CD8-positive, alpha-beta T cell (primary cell): ENCODE measurements at regions of chr19 and their contacts with region 1.

Region 1: DNA sequence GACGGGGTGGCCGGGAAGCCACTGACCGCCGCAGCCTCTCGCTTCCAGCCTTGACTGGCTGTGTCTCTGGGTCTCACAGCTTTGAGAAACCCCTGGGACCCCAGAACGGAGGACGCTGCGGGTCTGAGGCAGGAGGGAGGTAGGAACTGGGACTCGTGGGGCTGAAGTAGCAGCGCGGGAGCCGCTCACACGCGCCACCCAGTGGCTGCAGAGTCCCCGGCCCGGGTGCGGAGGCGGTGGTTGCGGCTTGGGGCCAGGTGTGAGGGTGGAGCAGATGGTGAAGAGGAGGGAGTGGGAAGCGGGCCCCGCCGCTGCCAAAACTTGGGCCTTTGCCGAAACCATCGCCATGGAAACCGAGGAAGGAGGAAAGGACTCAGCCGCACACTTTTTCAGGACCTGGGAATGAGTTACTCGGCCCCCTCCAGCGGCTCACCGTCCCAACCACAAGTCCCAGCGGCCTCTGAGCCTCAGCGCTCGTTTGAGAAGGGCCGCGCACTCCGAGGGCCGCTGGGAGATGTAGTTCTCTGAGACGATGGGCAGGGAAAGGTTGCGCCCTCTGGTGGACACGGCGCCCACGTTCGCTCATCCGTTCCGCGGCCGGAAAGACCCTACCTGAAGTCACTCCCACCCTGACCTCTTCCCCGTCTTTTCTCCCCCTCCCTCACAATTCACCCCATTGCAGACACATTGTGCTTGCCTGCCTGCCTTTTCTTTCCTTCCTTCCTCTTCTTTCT is 2.2 kb upstream of the SLC17A7 start:
- DNase-seq: peak; percentile 86 to 97 (median 94)
- ATAC-seq: peak; percentile 88
- H3K4me3 ChIP-seq: peak overlapping the region; percentile 57 to 76
- H3K4me3 Mint-ChIP-seq: peak overlapping the region; percentile 79
- H3K27ac ChIP-seq: peak overlapping the region; percentile 48 to 66
- H3K27ac Mint-ChIP-seq: peak overlapping the region; percentile 71
- H3K4me1 ChIP-seq: peaks cover 25% of the 10 kb centered on the region
- H3K4me1 Mint-ChIP-seq: peaks cover 37% of the 10 kb centered on the region
- H3K27me3 ChIP-seq: peaks cover 37 to 40% of the 10 kb centered on the region in 2 experiments
- H3K27me3 Mint-ChIP-seq: peaks cover 36% of the 10 kb centered on the region
- CTCF ChIP-seq: peak; percentile 74

Region 2: GRCh38 chr19:49224856-49225255 is 218.7 kb before region 1 on chr19:
- CTCF ChIA-PET with region 1: interaction called, 3 read pairs
- POLR2A ChIA-PET with region 1: interaction called, 4 read pairs
- intact Hi-C with region 1: loop called (anchors 1 kb)
- DNase-seq: peak in 2 of 9 experiments; percentile 26 to 28
- ATAC-seq: no peak
- H3K4me3 ChIP-seq: no peak overlapping the region
- H3K4me3 Mint-ChIP-seq: no peak overlapping the region
- H3K27ac ChIP-seq: no peak overlapping the region
- H3K27ac Mint-ChIP-seq: no peak overlapping the region
- H3K4me1 ChIP-seq: peaks cover 8% of the 10 kb centered on the region
- H3K4me1 Mint-ChIP-seq: peaks cover 4% of the 10 kb centered on the region
- H3K27me3 ChIP-seq: no peaks in the 10 kb centered on the region
- H3K27me3 Mint-ChIP-seq: peaks cover 12% of the 10 kb centered on the region
- CTCF ChIP-seq: no peak

Region 3: GRCh38 chr19:49272184-49272583 is 171.3 kb before region 1 on chr19:
- CTCF ChIA-PET with region 1: interaction called, 5 read pairs
- POLR2A ChIA-PET with region 1: no interaction called
- intact Hi-C with region 1: loop called in 1 of 2 experiments (anchors 2 kb)
- DNase-seq: no peak
- ATAC-seq: no peak
- H3K4me3 ChIP-seq: no peak overlapping the region
- H3K4me3 Mint-ChIP-seq: no peak overlapping the region
- H3K27ac ChIP-seq: no peak overlapping the region
- H3K27ac Mint-ChIP-seq: no peak overlapping the region
- H3K4me1 ChIP-seq: no peaks in the 10 kb centered on the region
- H3K4me1 Mint-ChIP-seq: no peaks in the 10 kb centered on the region
- H3K27me3 ChIP-seq: no peaks in the 10 kb centered on the region
- H3K27me3 Mint-ChIP-seq: peaks cover 13% of the 10 kb centered on the region
- CTCF ChIP-seq: no peak

Region 4: GRCh38 chr19:49333811-49334288 is 109.7 kb before region 1 on chr19:
- CTCF ChIA-PET with region 1: interaction called, 3 read pairs
- POLR2A ChIA-PET with region 1: interaction called, 3 read pairs
- intact Hi-C with region 1: loop called (anchors 1 kb)
- DNase-seq: peak; percentile 33 to 90 (median 73)
- ATAC-seq: peak; percentile 59
- H3K4me3 ChIP-seq: peak overlapping the region; percentile 20 to 50
- H3K4me3 Mint-ChIP-seq: peak overlapping the region; percentile 77
- H3K27ac ChIP-seq: peak overlapping the region; percentile 46 to 89
- H3K27ac Mint-ChIP-seq: peak overlapping the region; percentile 99
- H3K4me1 ChIP-seq: peaks cover 68% of the 10 kb centered on the region
- H3K4me1 Mint-ChIP-seq: peaks cover 76% of the 10 kb centered on the region
- H3K27me3 ChIP-seq: no peaks in the 10 kb centered on the region
- H3K27me3 Mint-ChIP-seq: no peaks in the 10 kb centered on the region
- CTCF ChIP-seq: no peak

Region 5: GRCh38 chr19:49430678-49431329 is 12.7 kb before region 1 on chr19:
- CTCF ChIA-PET with region 1: interaction called, 9 read pairs
- POLR2A ChIA-PET with region 1: interaction called, 3 read pairs
- intact Hi-C with region 1: loop called in 1 of 2 experiments (anchors 2 kb)
- DNase-seq: peak in 2 of 9 experiments; percentile 44 to 52
- ATAC-seq: peak; percentile 37
- H3K4me3 ChIP-seq: no peak overlapping the region
- H3K4me3 Mint-ChIP-seq: no peak overlapping the region
- H3K27ac ChIP-seq: no peak overlapping the region
- H3K27ac Mint-ChIP-seq: no peak overlapping the region
- H3K4me1 ChIP-seq: peaks cover 36% of the 10 kb centered on the region
- H3K4me1 Mint-ChIP-seq: peaks cover 42% of the 10 kb centered on the region
- H3K27me3 ChIP-seq: peaks cover 63 to 82% of the 10 kb centered on the region in 2 experiments
- H3K27me3 Mint-ChIP-seq: peaks cover 77% of the 10 kb centered on the region
- CTCF ChIP-seq: peak; percentile 26

Region 6: GRCh38 chr19:49468746-49469447 is 25.4 kb after region 1 on chr19:
- CTCF ChIA-PET with region 1: interaction called, 34 read pairs
- POLR2A ChIA-PET with region 1: interaction called, 4 read pairs
- intact Hi-C with region 1: loop called (anchors 1 kb)
- DNase-seq: peak; percentile 73 to 98 (median 91)
- ATAC-seq: peak; percentile 70
- H3K4me3 ChIP-seq: peak overlapping the region in 1 of 2 experiments; percentile 9
- H3K4me3 Mint-ChIP-seq: peak overlapping the region; percentile 69
- H3K27ac ChIP-seq: peak overlapping the region; percentile 88 to 90
- H3K27ac Mint-ChIP-seq: peak overlapping the region; percentile 99
- H3K4me1 ChIP-seq: peaks cover 55% of the 10 kb centered on the region
- H3K4me1 Mint-ChIP-seq: peaks cover 44% of the 10 kb centered on the region
- H3K27me3 ChIP-seq: no peaks in the 10 kb centered on the region
- H3K27me3 Mint-ChIP-seq: no peaks in the 10 kb centered on the region
- CTCF ChIP-seq: no peak

Region 7: DNA sequence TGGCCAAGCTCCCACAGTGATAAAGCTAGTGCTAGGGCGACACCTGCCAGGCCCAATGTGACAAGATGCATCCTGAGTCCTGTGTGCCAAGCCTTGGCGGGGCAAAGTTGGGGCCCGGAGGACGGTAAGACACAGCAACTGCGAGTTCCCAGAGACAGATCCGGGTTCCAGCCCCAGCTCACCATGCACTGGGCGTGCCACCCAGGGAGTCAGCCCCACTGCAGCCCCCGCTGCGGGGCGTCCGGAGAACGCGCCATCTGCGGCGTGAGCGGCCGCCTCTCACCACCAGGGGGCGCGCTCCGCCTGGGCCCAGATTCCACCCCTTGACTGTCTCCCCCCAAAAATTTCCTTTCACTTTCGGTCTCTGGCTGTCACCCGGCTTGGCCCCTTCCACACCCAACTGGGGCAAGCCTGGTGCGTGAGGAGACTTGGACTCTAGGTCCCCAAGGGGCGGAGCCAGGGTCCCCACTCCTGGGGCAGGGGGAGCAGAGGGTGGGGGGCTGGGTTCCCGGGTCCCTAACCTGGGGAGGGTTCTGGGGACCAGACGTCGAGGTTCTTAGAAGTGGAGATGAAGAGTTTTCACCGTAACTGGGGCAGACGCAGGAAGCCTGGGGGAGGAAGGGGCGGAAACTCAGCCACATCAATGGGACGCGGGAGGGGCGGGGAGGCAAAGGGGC is 30.5 kb after region 1 on chr19 and contains the start of gene FLT3LG:
- CTCF ChIA-PET with region 1: interaction called, 34 read pairs
- POLR2A ChIA-PET with region 1: interaction called, 4 read pairs
- intact Hi-C with region 1: loop called (anchors 1 kb)
- DNase-seq: peak; percentile 83 to 97 (median 91)
- ATAC-seq: peak; percentile 58
- H3K4me3 ChIP-seq: peak within 1 kb of the TSS; percentile 88 to 98
- H3K4me3 Mint-ChIP-seq: peak within 1 kb of the TSS; percentile 91
- H3K27ac ChIP-seq: peak within 1 kb of the TSS; percentile 92 to 96
- H3K27ac Mint-ChIP-seq: peak within 1 kb of the TSS; percentile 98
- H3K4me1 ChIP-seq: peaks cover 53% of the 10 kb centered on the region
- H3K4me1 Mint-ChIP-seq: peaks cover 54% of the 10 kb centered on the region
- H3K27me3 ChIP-seq: no peaks in the 10 kb centered on the region
- H3K27me3 Mint-ChIP-seq: no peaks in the 10 kb centered on the region
- CTCF ChIP-seq: peak; percentile 83
- total RNA-seq, gene FLT3LG: 246 to 259 TPM

Region 8: GRCh38 chr19:49564616-49565045 is 121.1 kb after region 1 on chr19:
- CTCF ChIA-PET with region 1: no interaction called
- POLR2A ChIA-PET with region 1: no interaction called
- intact Hi-C with region 1: no loop called
- DNase-seq: peak in 3 of 9 experiments; percentile 28 to 61 (median 51)
- ATAC-seq: peak; percentile 39
- H3K4me3 ChIP-seq: no peak overlapping the region
- H3K4me3 Mint-ChIP-seq: peak overlapping the region; percentile 42
- H3K27ac ChIP-seq: peak overlapping the region; percentile 26 to 68
- H3K27ac Mint-ChIP-seq: peak overlapping the region; percentile 94
- H3K4me1 ChIP-seq: peaks cover 92% of the 10 kb centered on the region
- H3K4me1 Mint-ChIP-seq: peaks cover 80% of the 10 kb centered on the region
- H3K27me3 ChIP-seq: no peaks in the 10 kb centered on the region
- H3K27me3 Mint-ChIP-seq: no peaks in the 10 kb centered on the region
- CTCF ChIP-seq: no peak